ENCODE measurements at regions of chrX and their contacts with region 1.

Region 1: GRCh38 chrX:136488706-136489105 is 959 bp downstream of the BRS3 start:
- DNase-seq: no peak
- H3K4me3 ChIP-seq: no peak overlapping the region
- H3K27ac ChIP-seq: no peak overlapping the region
- H3K4me1 ChIP-seq: no peaks in the 10 kb centered on the region
- H3K27me3 ChIP-seq: no peaks in the 10 kb centered on the region
- CTCF ChIP-seq: peak; percentile 64

Region 2: GRCh38 chrX:136168929-136169735 is 319.6 kb before region 1 on chrX:
- CTCF ChIA-PET with region 1: no interaction called
- POLR2A ChIA-PET with region 1: no interaction called
- intact Hi-C with region 1: loop called (anchors 5 kb)
- DNase-seq: peak; percentile 33 to 94
- H3K4me3 ChIP-seq: no peak overlapping the region
- H3K27ac ChIP-seq: no peak overlapping the region
- H3K4me1 ChIP-seq: peaks cover 42% of the 10 kb centered on the region
- H3K27me3 ChIP-seq: no peaks in the 10 kb centered on the region
- CTCF ChIP-seq: no peak

Region 3: DNA sequence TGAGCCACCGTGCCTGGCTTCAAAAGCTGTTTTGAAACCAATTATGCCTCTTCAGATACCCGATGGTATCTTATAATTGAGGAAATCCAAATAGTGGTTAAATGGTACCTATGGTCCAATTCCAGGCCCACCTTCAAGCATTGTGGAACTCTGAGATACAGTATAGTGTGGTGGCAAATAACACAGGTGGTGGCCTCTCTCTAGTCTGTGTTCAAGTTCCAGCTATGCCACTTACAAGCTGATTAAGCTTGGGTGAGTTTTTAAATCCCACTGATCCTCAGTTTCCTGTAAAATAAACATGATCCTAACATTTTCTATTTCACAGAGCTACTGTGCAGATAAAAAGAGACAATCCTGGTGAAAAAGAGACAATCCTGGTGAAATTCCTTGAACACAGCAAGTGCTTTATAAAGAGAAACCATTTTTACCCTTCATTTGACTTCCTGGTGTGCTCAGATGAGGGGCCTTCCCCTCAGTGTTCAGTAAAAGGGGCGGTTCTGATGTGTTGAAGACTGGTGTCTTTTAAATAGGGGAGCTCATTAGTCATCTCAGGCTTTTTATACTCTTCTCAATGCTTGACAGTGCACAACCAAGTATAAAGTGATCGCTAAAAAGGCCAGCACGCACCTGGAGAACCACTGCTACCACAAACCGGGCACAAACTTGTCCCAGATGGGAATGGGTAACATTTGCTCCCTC is 128.4 kb after region 1 on chrX:
- CTCF ChIA-PET with region 1: interaction called, 10 read pairs
- POLR2A ChIA-PET with region 1: no interaction called
- intact Hi-C with region 1: no loop called
- DNase-seq: no peak
- H3K4me3 ChIP-seq: no peak overlapping the region
- H3K27ac ChIP-seq: no peak overlapping the region
- H3K4me1 ChIP-seq: no peaks in the 10 kb centered on the region
- H3K27me3 ChIP-seq: no peaks in the 10 kb centered on the region
- CTCF ChIP-seq: no peak